ENCODE measurements at regions of chr15 and their contacts with region 1.

Region 1: GRCh38 chr15:43008150-43008549 is 87.6 kb upstream of the TTBK2 start:
- DNase-seq: no peak
- ATAC-seq: no peak
- H3K4me3 ChIP-seq: no peak overlapping the region
- H3K27ac ChIP-seq: no peak overlapping the region
- H3K4me1 ChIP-seq: peaks cover 0 to 5% (median 0%) of the 10 kb centered on the region in 12 donors
- H3K27me3 ChIP-seq: no peaks in the 10 kb centered on the region
- CTCF ChIP-seq: no peak
- POLR2A ChIP-seq: no peak

Region 2: GRCh38 chr15:42955518-42955917 is 52.6 kb before region 1 on chr15:
- intact Hi-C with region 1: loop called in 1 of 10 experiments (anchors 10 kb)
- DNase-seq: no peak
- ATAC-seq: no peak
- H3K4me3 ChIP-seq: no peak overlapping the region
- H3K27ac ChIP-seq: no peak overlapping the region
- H3K4me1 ChIP-seq: no peaks in the 10 kb centered on the region
- H3K27me3 ChIP-seq: no peaks in the 10 kb centered on the region
- CTCF ChIP-seq: no peak
- POLR2A ChIP-seq: no peak

Region 3: GRCh38 chr15:43067717-43068461 is 59.7 kb after region 1 on chr15:
- intact Hi-C with region 1: loop called in 1 of 10 experiments (anchors 10 kb)
- DNase-seq: no peak
- ATAC-seq: no peak
- H3K4me3 ChIP-seq: no peak overlapping the region
- H3K27ac ChIP-seq: no peak overlapping the region
- H3K4me1 ChIP-seq: peaks cover 0 to 5% (median 0%) of the 10 kb centered on the region in 12 donors
- H3K27me3 ChIP-seq: no peaks in the 10 kb centered on the region
- CTCF ChIP-seq: no peak
- POLR2A ChIP-seq: no peak